Activated T-helper 1 cell treated with anti-CD3 and anti-CD28 coated beads, Interleukin-12 subunit alpha, Interleukin-12 subunit beta, Interleukin-2, Interleukin-4 antibody, amounts not matched to agents 30 ng/mL and 10 ng/mL and 1 ng/mL, durations not matched to agents 14 hours and 24 hours and 36 hours (primary cell): ENCODE measurements at regions of chr3 and their contacts with region 1.

Region 1: DNA sequence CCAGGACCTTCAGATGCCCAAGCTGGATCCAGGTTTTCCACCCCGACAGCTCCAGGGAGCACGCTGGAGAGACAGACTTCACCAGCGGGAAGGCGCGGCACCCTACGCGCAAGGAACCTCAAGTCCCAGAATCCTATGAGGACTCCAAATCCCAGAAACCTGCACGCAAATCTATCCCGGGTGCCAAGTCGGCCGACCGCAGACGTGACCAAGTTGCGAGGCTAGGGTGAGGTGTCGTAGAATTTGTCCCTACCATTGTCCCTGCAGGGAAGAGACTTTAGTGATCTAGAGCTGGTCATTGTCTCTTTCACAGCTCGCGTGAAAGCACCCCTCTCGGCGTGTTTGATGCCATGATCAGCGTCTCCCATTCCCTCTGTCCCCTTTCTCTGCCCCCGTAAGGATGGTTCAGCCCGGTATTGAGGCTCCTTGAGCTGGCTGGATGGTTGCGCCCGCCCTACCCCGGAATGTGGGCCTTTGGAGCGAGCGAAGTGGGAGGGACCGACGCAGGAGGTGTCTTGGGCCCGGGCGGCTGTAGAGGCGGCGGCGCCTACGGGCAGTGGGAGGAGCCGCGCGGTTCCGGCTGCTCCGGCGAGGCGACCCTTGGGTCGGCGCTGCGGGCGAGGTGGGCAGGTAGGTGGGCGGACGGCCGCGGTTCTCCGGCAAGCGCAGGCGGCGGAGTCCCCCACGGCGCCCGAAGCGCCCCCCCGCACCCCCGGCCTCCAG is at the start of gene PRKCI:
- DNase-seq: peak; percentile 85
- H3K4me3 Mint-ChIP-seq: peak within 1 kb of the TSS; percentile 94
- H3K27ac Mint-ChIP-seq: peak within 1 kb of the TSS; percentile 87
- H3K4me1 Mint-ChIP-seq: peaks cover 25% of the 10 kb centered on the region
- H3K27me3 Mint-ChIP-seq: no peaks in the 10 kb centered on the region
- total RNA-seq, gene PRKCI: 23.0 and 24.2 TPM in 2 replicates

Region 2: GRCh38 chr3:169772897-169773828 is 448.9 kb before region 1 on chr3 and contains the start of gene MYNN:
- intact Hi-C with region 1: loop called (anchors 2 kb)
- DNase-seq: peak; percentile 91
- H3K4me3 Mint-ChIP-seq: peak within 1 kb of the TSS; percentile 97
- H3K27ac Mint-ChIP-seq: peak within 1 kb of the TSS; percentile 99
- H3K4me1 Mint-ChIP-seq: peaks cover 56% of the 10 kb centered on the region
- H3K27me3 Mint-ChIP-seq: peaks cover 5% of the 10 kb centered on the region
- total RNA-seq, gene MYNN: 14.5 and 16.8 TPM in 2 replicates

Region 3: DNA sequence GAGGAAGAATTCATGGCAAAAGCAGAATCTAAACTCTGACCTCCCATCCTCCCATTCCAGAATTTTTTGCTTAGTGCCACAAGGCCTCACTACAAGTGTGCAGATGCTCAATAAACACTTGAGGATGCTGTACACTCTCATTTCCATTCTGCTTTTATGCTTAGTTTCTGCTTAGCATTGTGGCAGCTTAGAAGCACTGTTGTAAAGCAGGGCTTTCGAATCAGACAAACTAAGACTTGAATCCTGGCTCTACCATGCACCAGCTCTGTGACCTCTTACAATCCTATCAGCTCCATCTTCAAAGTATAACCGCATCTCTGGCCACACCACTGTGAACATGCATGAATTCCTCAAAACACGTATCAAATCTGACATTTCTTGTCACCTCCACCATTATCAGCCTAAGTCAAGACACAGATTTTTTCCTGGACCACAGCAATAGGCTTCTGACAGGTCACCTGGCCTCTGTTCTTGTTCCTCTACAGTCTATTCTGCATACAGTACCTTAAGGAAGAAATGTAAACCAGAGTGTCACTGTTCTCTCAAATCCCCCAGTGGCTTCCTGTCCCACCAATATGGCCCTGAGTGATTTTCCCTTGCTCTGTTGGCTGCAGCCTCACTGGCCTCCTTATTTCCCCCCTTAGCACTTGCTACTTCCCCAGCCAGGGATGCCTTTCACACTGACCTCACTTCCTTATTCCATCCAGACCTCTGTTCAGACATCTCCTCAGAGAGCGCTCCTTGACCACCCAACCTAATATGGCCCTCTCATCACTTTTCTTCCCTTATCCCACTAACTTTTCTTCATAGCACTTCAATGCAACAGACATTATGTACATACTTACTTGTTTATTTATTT is 32.5 kb before region 1 on chr3:
- intact Hi-C with region 1: loop called (anchors 2 kb)
- DNase-seq: no peak
- H3K4me3 Mint-ChIP-seq: no peak overlapping the region
- H3K27ac Mint-ChIP-seq: no peak overlapping the region
- H3K4me1 Mint-ChIP-seq: peaks cover 15% of the 10 kb centered on the region
- H3K27me3 Mint-ChIP-seq: peaks cover 15% of the 10 kb centered on the region

Region 4: DNA sequence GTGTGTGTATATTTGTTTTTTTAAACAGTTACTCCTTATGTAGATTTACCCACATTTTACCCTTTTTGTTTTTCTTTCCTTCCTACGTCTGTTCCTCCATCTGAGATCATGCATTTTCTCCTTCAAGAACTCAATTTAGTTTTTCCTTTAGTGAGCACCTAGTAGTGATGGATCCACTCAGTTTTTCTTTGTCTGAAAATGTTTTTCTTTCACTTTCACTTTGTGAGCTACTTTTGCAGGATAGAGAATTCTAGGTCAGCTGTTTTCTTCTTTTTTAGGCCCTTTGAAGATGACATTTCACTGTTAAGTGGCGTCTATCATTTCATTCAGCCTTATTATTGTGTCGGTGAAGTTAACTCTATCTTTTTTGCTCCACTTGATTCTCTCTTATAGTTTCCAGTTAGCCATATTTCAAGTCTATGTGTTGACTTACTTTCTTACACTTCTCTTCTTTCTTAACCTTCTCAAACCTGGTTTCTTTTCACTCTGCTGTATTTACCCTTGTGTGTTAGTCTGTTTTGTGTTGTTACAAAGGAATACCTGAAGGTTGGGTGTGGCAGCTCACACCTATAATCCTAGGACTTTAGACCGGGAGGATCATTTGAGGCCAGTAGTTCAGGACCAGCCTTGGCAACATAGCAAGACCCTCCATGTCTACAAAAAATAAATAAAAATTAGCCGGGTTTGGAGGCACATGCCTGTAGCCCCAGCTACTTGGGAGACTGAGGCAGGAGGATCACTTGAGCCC is 55.9 kb after region 1 on chr3:
- intact Hi-C with region 1: loop called (anchors 2 kb)
- DNase-seq: no peak
- H3K4me3 Mint-ChIP-seq: peak overlapping the region; percentile 83
- H3K27ac Mint-ChIP-seq: peak overlapping the region; percentile 86
- H3K4me1 Mint-ChIP-seq: peaks cover 30% of the 10 kb centered on the region
- H3K27me3 Mint-ChIP-seq: no peaks in the 10 kb centered on the region

Region 5: GRCh38 chr3:170908235-170909116 is 686.4 kb after region 1 on chr3 and contains the start of gene EIF5A2:
- intact Hi-C with region 1: loop called (anchors 2 kb)
- DNase-seq: peak; percentile 88
- H3K4me3 Mint-ChIP-seq: peak within 1 kb of the TSS; percentile 96
- H3K27ac Mint-ChIP-seq: peak within 1 kb of the TSS; percentile 85
- H3K4me1 Mint-ChIP-seq: peaks cover 24% of the 10 kb centered on the region
- H3K27me3 Mint-ChIP-seq: peaks cover 12% of the 10 kb centered on the region
- total RNA-seq, gene EIF5A2: 8.1 and 10.5 TPM in 2 replicates